Testis (tissue), 5 donors: ENCODE measurements at regions of chr1 and their contacts with region 1.

Region 1: DNA sequence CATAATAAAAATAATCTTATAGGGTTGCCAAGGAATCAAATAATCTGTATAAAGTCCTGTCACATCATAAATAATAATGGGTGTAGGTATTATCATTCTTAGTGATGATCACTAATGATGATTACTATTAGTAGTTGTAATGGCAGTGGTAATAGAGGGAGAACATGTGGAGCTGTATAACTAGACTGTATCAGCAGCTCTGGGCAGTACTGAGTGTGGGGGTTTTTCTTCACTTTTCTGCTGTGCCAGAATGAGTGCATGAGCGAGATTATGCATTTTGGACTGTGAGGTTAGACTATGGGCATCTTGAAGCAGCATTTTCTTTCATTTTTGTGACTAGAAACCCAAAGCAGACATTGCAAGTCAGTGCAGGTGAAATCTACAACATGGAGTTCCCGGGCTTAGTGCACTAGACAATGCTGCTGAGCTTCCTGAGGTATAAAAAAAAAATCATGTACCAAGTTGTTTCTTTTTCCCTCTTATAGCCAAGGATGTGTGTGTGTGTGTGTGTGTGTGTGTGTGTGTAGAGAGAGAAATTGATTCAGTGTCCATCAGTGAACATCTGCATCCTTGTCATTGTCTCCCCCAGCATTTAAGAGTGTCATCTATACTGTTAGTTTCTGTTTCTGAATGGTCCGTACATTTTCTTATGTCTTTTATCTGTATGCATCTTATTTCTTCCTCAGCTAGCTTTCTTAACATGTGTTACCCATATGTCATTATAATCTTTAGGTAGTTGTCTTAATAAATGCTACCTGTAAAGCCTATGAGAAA is 86.6 kb downstream of the GIPC2 start:
- DNase-seq: no peak
- H3K4me3 ChIP-seq: no peak overlapping the region
- H3K27ac ChIP-seq: no peak overlapping the region
- H3K4me1 ChIP-seq: no peaks in the 10 kb centered on the region
- H3K27me3 ChIP-seq: no peaks in the 10 kb centered on the region
- CTCF ChIP-seq: no peak
- POLR2A ChIP-seq: no peak

Region 2: DNA sequence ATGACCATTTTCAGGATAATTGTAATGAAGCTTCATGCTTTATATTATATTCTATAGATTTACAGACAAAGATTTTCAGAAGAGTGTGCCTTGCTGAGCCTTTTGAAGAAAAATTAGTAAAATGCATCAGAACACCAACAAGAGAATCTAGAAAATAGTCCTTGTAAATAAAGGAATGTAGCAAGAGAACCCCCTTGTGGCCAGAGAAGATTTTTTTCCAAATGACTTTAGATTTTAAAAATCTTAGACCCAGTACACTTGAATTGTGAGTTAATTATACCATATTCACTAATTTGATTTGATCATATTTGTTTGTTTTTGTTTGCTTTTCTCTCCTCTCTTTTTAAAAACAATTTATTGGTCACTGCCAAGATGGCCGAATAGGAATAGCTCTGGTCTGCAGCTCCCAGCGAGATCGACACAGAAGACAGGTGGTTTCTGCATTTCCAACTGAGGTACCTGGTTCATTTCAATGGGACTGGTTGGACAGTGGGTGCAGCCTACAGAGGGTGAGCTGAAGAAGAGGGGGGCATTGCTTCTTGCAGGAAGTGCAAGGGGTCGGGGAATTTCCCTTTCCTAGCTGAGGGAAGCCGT is 475.1 kb after region 1 on chr1:
- intact Hi-C with region 1: loop called (anchors 5 kb)
- DNase-seq: no peak
- H3K4me3 ChIP-seq: no peak overlapping the region
- H3K27ac ChIP-seq: no peak overlapping the region
- H3K4me1 ChIP-seq: no peaks in the 10 kb centered on the region
- H3K27me3 ChIP-seq: no peaks in the 10 kb centered on the region
- CTCF ChIP-seq: peak in 2 of 3 experiments; percentile 22 to 70
- POLR2A ChIP-seq: no peak